PC-3 (cell line): ENCODE measurements at regions of chr12 and their contacts with region 1.

Region 1: GRCh38 chr12:101501410-101501995 is 26.4 kb downstream of the SPIC start:
- DNase-seq: peak; percentile 40
- ATAC-seq: no peak
- H3K4me3 ChIP-seq: no peak overlapping the region
- H3K27ac ChIP-seq: no peak overlapping the region
- H3K4me1 ChIP-seq: no peaks in the 10 kb centered on the region
- H3K27me3 ChIP-seq: peaks cover 17% of the 10 kb centered on the region; the same call in 1 of the 2 replicates
- CTCF ChIP-seq: no peak

Region 2: DNA sequence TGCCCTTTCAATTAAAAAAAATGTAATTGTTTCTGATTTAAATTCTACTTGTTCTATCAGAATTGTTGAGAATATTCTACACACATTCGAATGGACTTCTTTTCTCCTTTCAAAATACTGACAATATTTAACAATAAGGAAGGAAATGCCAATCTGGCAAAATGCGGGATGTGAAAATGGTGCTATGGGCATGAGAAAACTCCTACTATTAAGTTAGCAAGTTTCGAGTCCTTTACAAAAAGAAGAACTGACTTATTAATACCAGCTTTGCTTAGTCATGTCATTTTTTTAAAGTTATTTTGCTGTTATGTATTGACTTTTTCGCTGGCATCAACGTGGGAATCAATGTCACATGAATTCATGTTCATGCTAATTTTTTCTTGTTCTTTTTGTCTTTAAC is 62.3 kb before region 1 on chr12:
- CTCF ChIA-PET with region 1: no interaction called
- POLR2A ChIA-PET with region 1: no interaction called
- intact Hi-C with region 1: no loop called
- DNase-seq: no peak
- ATAC-seq: no peak
- H3K4me3 ChIP-seq: no peak overlapping the region
- H3K27ac ChIP-seq: no peak overlapping the region
- H3K4me1 ChIP-seq: no peaks in the 10 kb centered on the region
- H3K27me3 ChIP-seq: peaks cover 18% of the 10 kb centered on the region; the same call in 1 of the 2 replicates
- CTCF ChIP-seq: no peak

Region 3: DNA sequence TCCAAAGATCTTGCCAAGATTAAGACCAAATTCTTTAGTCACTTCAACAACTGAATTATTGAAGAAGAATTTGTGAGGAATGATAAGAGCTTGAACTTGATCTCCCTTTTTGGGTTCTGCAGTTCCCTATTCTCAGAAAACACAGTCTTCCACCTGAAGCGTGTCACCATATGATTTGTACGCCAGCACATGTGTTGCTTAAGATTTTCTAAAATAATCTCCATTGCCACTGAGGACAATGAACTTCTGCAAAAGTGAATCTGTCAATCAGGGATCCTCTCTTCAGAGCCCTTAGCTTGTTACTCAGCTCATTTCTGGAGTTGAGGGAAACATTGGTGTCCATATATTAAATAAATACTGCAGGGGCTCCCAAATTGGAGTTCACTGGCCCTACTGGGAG is 30.6 kb before region 1 on chr12:
- CTCF ChIA-PET with region 1: no interaction called
- POLR2A ChIA-PET with region 1: interaction called, 22 read pairs
- intact Hi-C with region 1: no loop called
- DNase-seq: no peak
- ATAC-seq: no peak
- H3K4me3 ChIP-seq: no peak overlapping the region
- H3K27ac ChIP-seq: no peak overlapping the region
- H3K4me1 ChIP-seq: no peaks in the 10 kb centered on the region
- H3K27me3 ChIP-seq: peaks cover 29% of the 10 kb centered on the region
- CTCF ChIP-seq: no peak

Region 4: DNA sequence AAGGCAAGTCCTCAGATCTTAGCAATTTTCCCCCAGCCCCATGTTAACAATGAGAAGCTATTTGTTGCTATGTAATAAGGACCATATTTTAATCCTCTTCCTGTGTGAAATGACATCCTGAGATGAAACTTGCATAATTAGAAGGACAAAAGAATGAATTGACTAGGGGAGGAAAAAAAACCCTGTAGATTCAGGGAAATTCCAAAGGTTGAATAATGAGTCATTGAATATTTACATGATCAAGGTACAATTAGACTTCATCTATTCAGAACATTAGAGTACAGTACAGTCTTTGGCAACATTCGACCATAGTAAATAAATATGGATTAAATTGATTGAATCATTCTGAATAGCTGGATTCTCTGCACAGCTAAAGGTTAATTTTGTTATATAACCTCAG is 102.6 kb after region 1 on chr12:
- CTCF ChIA-PET with region 1: no interaction called
- POLR2A ChIA-PET with region 1: no interaction called
- intact Hi-C with region 1: no loop called
- DNase-seq: peak; percentile 42
- ATAC-seq: 0 out of 2 replicates have a peak, but pooled peaks have one; percentile 27
- H3K4me3 ChIP-seq: no peak overlapping the region
- H3K27ac ChIP-seq: no peak overlapping the region
- H3K4me1 ChIP-seq: peaks cover 31% of the 10 kb centered on the region
- H3K27me3 ChIP-seq: peaks cover 9% of the 10 kb centered on the region; the same call in 1 of the 2 replicates
- CTCF ChIP-seq: no peak